SK-N-SH (cell line): ENCODE measurements at regions of chr7 and their contacts with region 1.

Region 1: GRCh38 chr7:103412151-103412550 is 33.9 kb downstream of the SLC26A5 start:
- DNase-seq: no peak
- H3K4me3 ChIP-seq: no peak overlapping the region
- H3K27ac ChIP-seq: no peak overlapping the region
- H3K4me1 ChIP-seq: no peaks in the 10 kb centered on the region
- H3K27me3 ChIP-seq: no peaks in the 10 kb centered on the region
- CTCF ChIP-seq: no peak
- EP300 ChIP-seq: no peak
- RAD21 ChIP-seq: no peak

Region 2: GRCh38 chr7:103292122-103292521 is 120.0 kb before region 1 on chr7:
- CTCF ChIA-PET with region 1: interaction called, 11 read pairs
- POLR2A ChIA-PET with region 1: no interaction called
- DNase-seq: no peak
- H3K4me3 ChIP-seq: no peak overlapping the region
- H3K27ac ChIP-seq: no peak overlapping the region
- H3K4me1 ChIP-seq: peaks cover 0 to 2% of the 10 kb centered on the region in 2 experiments; a peak in 1 of 4 replicates
- H3K27me3 ChIP-seq: peaks cover 15% of the 10 kb centered on the region; the same call in 1 of the 2 replicates
- CTCF ChIP-seq: no peak
- EP300 ChIP-seq: no peak
- RAD21 ChIP-seq: no peak

Region 3: GRCh38 chr7:103392018-103392417 is 20.1 kb before region 1 on chr7:
- CTCF ChIA-PET with region 1: no interaction called
- POLR2A ChIA-PET with region 1: no interaction called
- DNase-seq: no peak
- H3K4me3 ChIP-seq: no peak overlapping the region
- H3K27ac ChIP-seq: no peak overlapping the region
- H3K4me1 ChIP-seq: no peaks in the 10 kb centered on the region
- H3K27me3 ChIP-seq: no peaks in the 10 kb centered on the region
- CTCF ChIP-seq: no peak
- EP300 ChIP-seq: no peak
- RAD21 ChIP-seq: no peak

Region 4: GRCh38 chr7:103560136-103560535 is 148.0 kb after region 1 on chr7:
- CTCF ChIA-PET with region 1: no interaction called
- POLR2A ChIA-PET with region 1: no interaction called
- DNase-seq: no peak
- H3K4me3 ChIP-seq: no peak overlapping the region
- H3K27ac ChIP-seq: no peak overlapping the region
- H3K4me1 ChIP-seq: no peaks in the 10 kb centered on the region
- H3K27me3 ChIP-seq: peaks cover 2% of the 10 kb centered on the region; the same call in 1 of the 2 replicates
- CTCF ChIP-seq: no peak
- EP300 ChIP-seq: no peak
- RAD21 ChIP-seq: no peak

Region 5: DNA sequence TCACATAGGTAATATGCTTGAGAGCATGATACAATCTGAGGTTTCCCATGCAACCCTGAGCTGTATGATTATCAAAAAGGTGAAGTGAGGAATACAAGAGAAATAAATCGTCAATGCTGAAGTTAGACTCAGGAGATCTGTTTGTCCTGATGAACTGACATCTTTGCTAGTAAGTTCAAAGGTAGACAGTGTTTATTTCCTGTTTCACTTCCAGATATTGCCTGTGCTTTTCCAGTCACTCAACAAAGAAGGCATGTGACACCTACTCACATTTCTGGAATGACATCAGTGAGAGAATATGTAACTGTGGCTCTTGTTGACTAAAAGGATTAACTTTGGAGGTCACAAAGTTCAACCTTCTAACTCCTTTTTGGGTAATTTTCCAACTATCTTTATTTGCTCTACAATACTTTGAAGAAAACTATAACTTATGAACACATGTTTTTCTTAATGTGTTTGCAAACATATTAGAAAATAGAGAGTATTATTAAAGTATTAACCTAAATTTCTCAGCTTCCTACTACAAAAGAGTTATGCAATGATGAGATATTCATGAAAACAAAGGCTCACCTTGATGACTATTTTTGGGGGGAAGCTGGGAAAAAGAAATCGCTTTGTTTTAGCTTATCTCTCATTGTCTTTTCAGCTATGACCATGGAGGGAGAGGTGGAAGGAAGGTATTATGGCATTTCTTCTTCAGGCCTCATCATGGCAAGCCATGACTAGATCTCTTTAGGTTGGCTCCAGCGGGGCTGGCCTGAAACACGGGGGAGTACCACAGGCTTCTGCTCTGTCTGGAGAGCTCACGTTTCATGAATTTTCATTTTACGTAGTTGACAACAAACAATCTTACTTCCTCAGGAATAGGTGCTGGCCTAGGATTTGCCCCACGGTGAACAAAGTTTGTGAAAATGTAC is 248.6 kb after region 1 on chr7:
- CTCF ChIA-PET with region 1: no interaction called
- POLR2A ChIA-PET with region 1: no interaction called
- DNase-seq: no peak
- H3K4me3 ChIP-seq: no peak overlapping the region
- H3K27ac ChIP-seq: no peak overlapping the region
- H3K4me1 ChIP-seq: no peaks in the 10 kb centered on the region
- H3K27me3 ChIP-seq: no peaks in the 10 kb centered on the region
- CTCF ChIP-seq: no peak
- EP300 ChIP-seq: no peak
- RAD21 ChIP-seq: no peak